ENCODE measurements at regions of chr7 and their contacts with region 1.

Region 1: GRCh38 chr7:1709900-1710299 is 39.8 kb downstream of the ELFN1 start:
- DNase-seq: no peak
- H3K4me3 ChIP-seq: no peak overlapping the region
- H3K27ac ChIP-seq: no peak overlapping the region
- H3K4me1 ChIP-seq: no peaks in the 10 kb centered on the region
- H3K27me3 ChIP-seq: no peaks in the 10 kb centered on the region
- CTCF ChIP-seq: peak in 1 of 3 experiments; percentile 18
- POLR2A ChIP-seq: no peak

Region 2: DNA sequence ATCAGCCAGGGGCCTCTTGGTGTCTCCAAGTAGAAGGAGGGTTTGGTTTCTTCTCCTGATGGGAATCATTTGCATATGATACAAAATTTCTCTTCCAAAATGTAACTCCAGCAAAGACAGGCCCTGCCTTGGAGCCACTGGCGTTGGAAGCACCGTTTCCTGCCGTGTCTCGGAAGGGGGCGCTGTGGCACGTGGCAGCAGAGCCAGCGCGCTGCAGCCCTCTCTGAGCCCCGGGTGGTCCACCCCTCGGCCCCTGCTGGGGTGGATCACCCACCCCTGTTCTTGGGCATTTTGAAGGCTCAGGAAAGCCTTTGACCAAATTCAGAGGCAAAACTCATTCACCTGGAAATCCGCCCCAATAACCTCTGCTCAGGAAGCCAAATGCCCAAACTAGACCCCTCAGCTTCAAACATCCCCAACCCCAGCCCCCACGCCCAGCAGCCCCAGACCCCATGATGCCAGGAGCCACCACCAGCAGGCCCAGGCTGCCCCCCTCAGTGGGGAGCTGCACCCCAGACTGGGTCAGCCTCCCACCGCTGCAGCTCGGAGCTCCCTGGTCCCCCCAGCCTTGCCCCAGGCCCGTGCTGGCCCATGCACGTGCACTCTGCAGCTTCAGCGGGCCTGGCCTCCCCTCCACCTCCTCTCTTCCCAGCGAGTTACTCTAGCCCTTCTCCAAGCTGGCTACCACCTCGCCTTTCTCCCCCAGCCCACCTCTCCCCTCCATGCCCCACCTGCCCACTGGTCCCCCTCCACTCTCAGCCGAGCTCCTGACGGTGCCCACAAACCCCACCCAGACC is 69.3 kb before region 1 on chr7:
- intact Hi-C with region 1: loop called (anchors 1 kb)
- DNase-seq: no peak
- H3K4me3 ChIP-seq: no peak overlapping the region
- H3K27ac ChIP-seq: no peak overlapping the region
- H3K4me1 ChIP-seq: no peaks in the 10 kb centered on the region
- H3K27me3 ChIP-seq: no peaks in the 10 kb centered on the region
- CTCF ChIP-seq: no peak
- POLR2A ChIP-seq: no peak

Region 3: GRCh38 chr7:1800902-1801301 is 91.0 kb after region 1 on chr7:
- intact Hi-C with region 1: no loop called
- DNase-seq: no peak
- H3K4me3 ChIP-seq: no peak overlapping the region
- H3K27ac ChIP-seq: no peak overlapping the region
- H3K4me1 ChIP-seq: no peaks in the 10 kb centered on the region
- H3K27me3 ChIP-seq: no peaks in the 10 kb centered on the region
- CTCF ChIP-seq: no peak
- POLR2A ChIP-seq: no peak